PC-9 (cell line): ENCODE measurements at regions of chr5 and their contacts with region 1.

Region 1: GRCh38 chr5:95781101-95781583 is 41.4 kb downstream of the GLRX start:
- DNase-seq: peak; percentile 68 to 69
- H3K4me3 ChIP-seq: no peak overlapping the region
- H3K27ac ChIP-seq: no peak overlapping the region
- H3K4me1 ChIP-seq: no peaks in the 10 kb centered on the region
- H3K27me3 ChIP-seq: no peaks in the 10 kb centered on the region
- CTCF ChIP-seq: peak; percentile 97

Region 2: GRCh38 chr5:95664204-95664786 is 116.8 kb before region 1 on chr5:
- CTCF ChIA-PET with region 1: interaction called, 5 read pairs
- POLR2A ChIA-PET with region 1: no interaction called
- intact Hi-C with region 1: loop called (anchors 2 kb)
- DNase-seq: peak in 1 of 2 experiments; percentile 7
- H3K4me3 ChIP-seq: no peak overlapping the region
- H3K27ac ChIP-seq: no peak overlapping the region
- H3K4me1 ChIP-seq: 0 out of 2 replicates have a peak, but pooled peaks cover 10% of the 10 kb centered on the region
- H3K27me3 ChIP-seq: no peaks in the 10 kb centered on the region
- CTCF ChIP-seq: peak; percentile 90

Region 3: DNA sequence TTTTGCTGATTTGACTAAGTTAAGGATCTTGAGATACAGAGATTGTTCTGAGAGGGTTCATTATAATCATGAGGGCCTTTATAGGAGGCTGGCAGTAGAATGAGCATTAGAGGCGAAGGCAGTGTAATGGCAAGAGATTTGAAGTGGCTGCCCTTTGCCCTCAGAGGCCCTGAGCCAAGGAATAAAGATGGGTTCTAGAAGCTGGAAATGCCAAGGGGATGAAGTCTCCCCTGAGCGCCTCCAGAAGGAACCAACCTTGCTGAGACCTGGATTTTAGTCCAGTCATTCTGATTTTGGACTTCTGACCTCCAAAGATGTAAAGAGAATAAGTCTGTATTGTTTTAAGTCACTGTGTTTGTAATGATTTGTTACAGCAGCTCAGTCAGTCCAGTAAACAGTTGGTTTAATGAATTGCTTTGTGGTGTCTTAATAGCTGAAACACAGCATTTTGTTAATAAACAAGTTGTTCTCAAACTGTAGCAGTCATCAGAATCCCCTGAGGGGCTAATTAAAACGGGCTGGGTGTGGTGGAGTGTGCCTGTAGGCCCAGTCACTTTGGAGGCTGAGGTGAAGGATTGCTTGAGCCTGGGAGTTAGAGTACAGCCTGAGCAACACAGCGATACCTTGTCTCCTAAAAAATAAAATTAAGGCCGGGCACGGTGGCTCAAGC is 18.2 kb after region 1 on chr5:
- CTCF ChIA-PET with region 1: no interaction called
- POLR2A ChIA-PET with region 1: interaction called, 11 read pairs
- intact Hi-C with region 1: no loop called
- DNase-seq: no peak
- H3K4me3 ChIP-seq: no peak overlapping the region
- H3K27ac ChIP-seq: no peak overlapping the region
- H3K4me1 ChIP-seq: no peaks in the 10 kb centered on the region
- H3K27me3 ChIP-seq: no peaks in the 10 kb centered on the region
- CTCF ChIP-seq: no peak

Region 4: GRCh38 chr5:96601811-96602244 is 820.7 kb after region 1 on chr5:
- CTCF ChIA-PET with region 1: no interaction called
- POLR2A ChIA-PET with region 1: no interaction called
- intact Hi-C with region 1: loop called (anchors 5 kb)
- DNase-seq: peak; percentile 32 to 38
- H3K4me3 ChIP-seq: no peak overlapping the region
- H3K27ac ChIP-seq: no peak overlapping the region
- H3K4me1 ChIP-seq: no peaks in the 10 kb centered on the region
- H3K27me3 ChIP-seq: no peaks in the 10 kb centered on the region
- CTCF ChIP-seq: peak; percentile 89